PC-3 (cell line): ENCODE measurements at regions of chr15 and their contacts with region 1.

Region 1: GRCh38 chr15:38707802-38708671 is 143.4 kb upstream of the RASGRP1 start:
- DNase-seq: peak; percentile 77
- ATAC-seq: peak; percentile 97
- H3K4me3 ChIP-seq: no peak overlapping the region
- H3K27ac ChIP-seq: no peak overlapping the region
- H3K4me1 ChIP-seq: no peaks in the 10 kb centered on the region
- H3K27me3 ChIP-seq: no peaks in the 10 kb centered on the region
- CTCF ChIP-seq: peak; percentile 84

Region 2: DNA sequence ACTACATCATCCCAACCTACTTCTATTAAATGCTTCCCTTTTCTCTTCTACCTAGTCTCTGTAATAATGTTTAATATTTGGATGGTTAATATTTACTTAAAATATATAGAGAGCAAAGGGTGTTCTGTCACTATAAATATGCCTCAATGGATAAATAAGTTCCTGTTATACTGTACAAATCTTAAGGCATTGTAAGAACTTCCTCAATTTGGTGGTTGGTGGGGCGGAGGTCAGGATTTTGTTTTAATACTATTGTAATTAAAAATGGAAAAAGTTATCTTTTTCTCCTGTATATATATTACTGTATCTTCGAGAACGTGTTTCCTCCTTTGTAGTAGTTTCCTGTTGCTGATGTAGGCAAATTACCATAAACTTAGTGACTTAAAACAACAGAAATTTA is 413.9 kb before region 1 on chr15:
- CTCF ChIA-PET with region 1: no interaction called
- POLR2A ChIA-PET with region 1: no interaction called
- intact Hi-C with region 1: no loop called
- DNase-seq: no peak
- ATAC-seq: no peak
- H3K4me3 ChIP-seq: no peak overlapping the region
- H3K27ac ChIP-seq: no peak overlapping the region
- H3K4me1 ChIP-seq: peaks cover 24% of the 10 kb centered on the region
- H3K27me3 ChIP-seq: no peaks in the 10 kb centered on the region
- CTCF ChIP-seq: no peak

Region 3: GRCh38 chr15:38991126-38991525 is 283.1 kb after region 1 on chr15:
- CTCF ChIA-PET with region 1: no interaction called
- POLR2A ChIA-PET with region 1: no interaction called
- intact Hi-C with region 1: loop called (anchors 5 kb)
- DNase-seq: peak; percentile 58
- ATAC-seq: no peak
- H3K4me3 ChIP-seq: no peak overlapping the region
- H3K27ac ChIP-seq: no peak overlapping the region
- H3K4me1 ChIP-seq: peaks cover 9% of the 10 kb centered on the region
- H3K27me3 ChIP-seq: no peaks in the 10 kb centered on the region
- CTCF ChIP-seq: peak; percentile 72

Region 4: DNA sequence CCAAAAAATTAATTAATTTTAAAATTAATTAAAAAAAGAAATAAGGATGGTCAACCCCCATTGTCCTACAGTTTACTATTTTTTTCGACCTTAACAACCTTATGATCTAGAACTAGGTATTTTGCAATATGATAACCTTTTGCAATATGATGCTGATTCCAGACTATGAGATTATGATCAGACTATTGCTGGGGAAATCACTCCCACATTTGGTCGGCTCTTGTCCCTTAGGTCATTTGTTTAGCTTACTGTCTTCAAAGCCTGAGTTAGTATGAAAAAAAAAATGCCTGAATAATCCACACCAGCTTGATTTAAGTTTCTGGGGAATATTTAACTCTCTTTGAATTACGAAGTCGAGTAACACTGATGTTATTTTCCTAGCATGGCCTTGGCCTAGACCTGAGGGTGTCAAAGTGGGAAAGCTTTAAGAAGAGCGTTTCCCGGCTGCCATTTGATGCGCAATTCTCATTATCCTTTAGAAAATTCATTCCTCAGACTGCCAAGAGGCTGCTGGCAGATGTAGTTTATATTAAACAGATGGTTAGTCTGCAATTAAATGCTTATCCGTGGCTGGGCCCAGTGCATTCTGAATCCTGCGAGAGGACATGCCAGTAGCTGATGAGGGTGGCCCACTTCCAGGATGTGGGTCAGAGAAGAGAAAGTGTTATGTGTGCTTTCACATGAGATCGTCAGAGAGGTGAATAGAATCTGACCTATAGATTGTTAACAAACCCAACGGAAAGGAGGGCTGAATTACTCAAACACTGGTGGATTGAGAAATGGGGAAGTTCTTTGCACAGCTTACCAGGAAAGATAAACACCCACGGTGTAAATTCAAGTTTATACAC is 376.9 kb after region 1 on chr15:
- CTCF ChIA-PET with region 1: no interaction called
- POLR2A ChIA-PET with region 1: no interaction called
- intact Hi-C with region 1: no loop called
- DNase-seq: no peak
- ATAC-seq: no peak
- H3K4me3 ChIP-seq: no peak overlapping the region
- H3K27ac ChIP-seq: no peak overlapping the region
- H3K4me1 ChIP-seq: no peaks in the 10 kb centered on the region
- H3K27me3 ChIP-seq: no peaks in the 10 kb centered on the region
- CTCF ChIP-seq: no peak

Region 5: DNA sequence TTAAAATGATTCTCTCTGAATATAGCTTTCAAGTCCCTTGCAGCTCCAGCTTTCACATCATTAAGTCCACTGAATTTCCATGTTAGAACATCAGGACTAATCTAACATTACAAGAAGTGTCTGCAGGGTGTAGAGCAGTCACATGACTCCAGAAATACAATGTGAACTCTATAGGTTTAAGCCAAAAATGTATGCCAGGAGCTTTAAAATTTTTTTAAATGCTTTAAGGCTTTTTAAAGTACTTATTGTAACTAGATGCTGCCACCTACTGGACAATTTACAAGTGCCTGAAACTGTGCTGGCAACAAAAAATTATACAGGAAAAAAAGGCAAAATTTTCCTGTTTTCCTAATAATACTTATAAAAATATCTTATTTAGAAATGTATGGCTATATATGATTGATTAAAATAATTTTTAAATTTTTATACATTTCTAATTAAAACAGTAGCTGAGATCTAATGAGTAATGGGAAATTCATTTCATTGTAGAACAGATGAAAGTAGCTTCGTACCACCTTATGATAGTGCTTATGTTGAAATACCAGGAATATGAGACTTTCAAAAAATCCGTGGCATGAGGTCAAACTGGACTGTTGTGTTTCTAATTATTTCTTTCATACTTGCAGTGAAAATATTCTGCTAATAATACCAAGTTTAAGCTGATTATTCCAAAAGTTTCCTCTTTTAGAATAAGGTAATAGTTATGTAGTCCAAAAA is 1048.9 kb after region 1 on chr15:
- CTCF ChIA-PET with region 1: no interaction called
- POLR2A ChIA-PET with region 1: no interaction called
- intact Hi-C with region 1: loop called (anchors 1 kb)
- DNase-seq: peak; percentile 79
- ATAC-seq: peak; percentile 46; the same call in 1 of the 2 replicates
- H3K4me3 ChIP-seq: no peak overlapping the region
- H3K27ac ChIP-seq: no peak overlapping the region
- H3K4me1 ChIP-seq: no peaks in the 10 kb centered on the region
- H3K27me3 ChIP-seq: no peaks in the 10 kb centered on the region
- CTCF ChIP-seq: peak; percentile 78